WTC11 (cell line): ENCODE measurements at regions of chr9 and their contacts with region 1.

Region 1: DNA sequence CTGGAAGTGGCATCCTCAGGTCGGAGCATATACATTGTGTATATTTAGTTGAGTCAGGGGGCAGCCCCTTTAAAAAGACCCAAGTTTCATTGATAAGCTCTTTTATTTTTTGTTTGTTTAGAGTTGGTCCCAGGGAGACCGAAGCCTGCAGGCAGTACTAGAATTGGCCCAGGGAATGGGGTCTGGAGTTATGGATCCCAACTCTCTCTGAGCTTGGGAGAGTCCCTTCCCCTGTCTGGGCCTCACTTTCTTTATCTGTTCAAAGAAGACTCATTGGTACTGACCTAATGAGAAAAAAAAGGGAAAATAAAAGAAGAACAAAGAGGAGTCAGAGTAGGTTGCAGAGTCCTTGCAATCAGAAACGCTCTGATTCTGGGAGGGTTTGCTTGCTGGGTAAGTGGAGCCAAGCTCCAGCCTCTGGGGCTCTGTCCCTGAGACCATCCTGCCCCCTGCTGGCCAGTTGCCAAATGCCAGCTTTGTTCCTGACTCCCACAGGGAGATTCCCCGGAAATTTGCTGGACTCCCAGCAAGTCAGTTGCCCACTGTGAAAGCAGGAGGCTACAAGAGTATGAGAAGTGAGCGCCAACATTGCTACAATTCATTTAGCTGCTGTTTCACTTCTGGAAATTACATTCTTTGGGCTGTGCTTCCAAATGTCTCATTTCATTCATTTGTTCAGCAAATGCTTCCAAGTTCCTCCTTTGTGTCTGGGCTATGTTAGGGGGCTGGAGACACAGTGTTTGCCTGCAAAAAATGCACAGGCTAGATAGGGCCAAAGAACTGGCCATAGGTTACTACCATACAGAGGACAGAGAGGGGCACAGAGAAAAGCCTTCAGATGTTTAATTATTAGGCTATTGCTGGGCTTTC is 156.2 kb downstream of the MELK start:
- DNase-seq: peak; percentile 97
- ATAC-seq: peak; percentile 75
- H3K4me3 Mint-ChIP-seq: no peak overlapping the region
- H3K27ac Mint-ChIP-seq: no peak overlapping the region
- H3K4me1 Mint-ChIP-seq: peaks cover 27% of the 10 kb centered on the region
- H3K27me3 Mint-ChIP-seq: no peaks in the 10 kb centered on the region
- CTCF ChIP-seq: peak; percentile 93

Region 2: DNA sequence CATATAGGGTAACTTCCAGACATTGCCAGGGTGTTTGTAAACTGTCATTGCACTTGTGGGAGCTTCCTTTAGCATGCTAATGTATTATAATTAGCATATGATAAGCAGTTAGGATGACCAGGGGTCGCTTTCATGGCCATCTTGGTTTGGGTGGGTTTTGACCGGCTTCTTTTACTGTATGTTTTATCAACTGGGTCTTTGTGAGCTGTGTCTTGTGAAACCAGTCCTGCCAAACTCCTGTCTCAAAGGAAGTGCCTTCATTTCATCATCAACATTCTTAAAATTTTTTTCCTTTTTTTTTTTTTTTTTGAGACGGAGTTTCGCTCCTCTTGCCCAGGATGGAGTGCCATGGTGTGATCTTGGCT is 168.0 kb before region 1 on chr9:
- CTCF ChIA-PET with region 1: no interaction called
- POLR2A ChIA-PET with region 1: no interaction called
- DNase-seq: no peak
- ATAC-seq: peak; percentile 50
- H3K4me3 Mint-ChIP-seq: no peak overlapping the region
- H3K27ac Mint-ChIP-seq: no peak overlapping the region
- H3K4me1 Mint-ChIP-seq: peaks cover 12% of the 10 kb centered on the region
- H3K27me3 Mint-ChIP-seq: no peaks in the 10 kb centered on the region
- CTCF ChIP-seq: no peak

Region 3: DNA sequence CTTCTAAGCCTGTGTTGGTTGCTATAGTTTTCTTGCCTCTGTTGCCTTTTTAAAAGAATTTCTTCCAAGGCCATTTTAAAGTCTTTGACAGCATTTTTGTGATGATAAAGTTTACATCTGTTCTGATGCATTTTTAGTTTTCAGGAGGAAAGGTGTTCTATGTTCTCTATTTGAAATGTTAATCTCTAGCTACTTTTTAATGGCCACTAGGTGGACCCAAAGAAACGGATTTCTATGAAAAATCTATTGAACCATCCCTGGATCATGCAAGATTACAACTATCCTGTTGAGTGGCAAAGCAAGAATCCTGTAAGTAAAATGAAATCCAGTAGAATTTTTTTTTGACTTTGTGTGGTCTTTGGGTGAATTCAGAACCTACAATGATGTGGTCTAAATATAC is 96.0 kb before region 1 on chr9:
- CTCF ChIA-PET with region 1: interaction called, 22 read pairs
- POLR2A ChIA-PET with region 1: no interaction called
- DNase-seq: no peak
- ATAC-seq: no peak
- H3K4me3 Mint-ChIP-seq: no peak overlapping the region
- H3K27ac Mint-ChIP-seq: peak overlapping the region; percentile 36; the same call in 1 of the 2 replicates
- H3K4me1 Mint-ChIP-seq: no peaks in the 10 kb centered on the region
- H3K27me3 Mint-ChIP-seq: no peaks in the 10 kb centered on the region
- CTCF ChIP-seq: peak; percentile 11; the same call in 1 of the 2 replicates

Region 4: GRCh38 chr9:36698984-36699383 is 29.9 kb before region 1 on chr9:
- CTCF ChIA-PET with region 1: no interaction called
- POLR2A ChIA-PET with region 1: no interaction called
- DNase-seq: no peak
- ATAC-seq: no peak
- H3K4me3 Mint-ChIP-seq: no peak overlapping the region
- H3K27ac Mint-ChIP-seq: no peak overlapping the region
- H3K4me1 Mint-ChIP-seq: no peaks in the 10 kb centered on the region
- H3K27me3 Mint-ChIP-seq: peaks cover 10% of the 10 kb centered on the region
- CTCF ChIP-seq: no peak